ENCODE measurements at regions of chr2 and their contacts with region 1.

Region 1: GRCh38 chr2:70671092-70671675 is 96.8 kb downstream of the ADD2 start:
- DNase-seq: no peak
- ATAC-seq: no peak

Region 2: DNA sequence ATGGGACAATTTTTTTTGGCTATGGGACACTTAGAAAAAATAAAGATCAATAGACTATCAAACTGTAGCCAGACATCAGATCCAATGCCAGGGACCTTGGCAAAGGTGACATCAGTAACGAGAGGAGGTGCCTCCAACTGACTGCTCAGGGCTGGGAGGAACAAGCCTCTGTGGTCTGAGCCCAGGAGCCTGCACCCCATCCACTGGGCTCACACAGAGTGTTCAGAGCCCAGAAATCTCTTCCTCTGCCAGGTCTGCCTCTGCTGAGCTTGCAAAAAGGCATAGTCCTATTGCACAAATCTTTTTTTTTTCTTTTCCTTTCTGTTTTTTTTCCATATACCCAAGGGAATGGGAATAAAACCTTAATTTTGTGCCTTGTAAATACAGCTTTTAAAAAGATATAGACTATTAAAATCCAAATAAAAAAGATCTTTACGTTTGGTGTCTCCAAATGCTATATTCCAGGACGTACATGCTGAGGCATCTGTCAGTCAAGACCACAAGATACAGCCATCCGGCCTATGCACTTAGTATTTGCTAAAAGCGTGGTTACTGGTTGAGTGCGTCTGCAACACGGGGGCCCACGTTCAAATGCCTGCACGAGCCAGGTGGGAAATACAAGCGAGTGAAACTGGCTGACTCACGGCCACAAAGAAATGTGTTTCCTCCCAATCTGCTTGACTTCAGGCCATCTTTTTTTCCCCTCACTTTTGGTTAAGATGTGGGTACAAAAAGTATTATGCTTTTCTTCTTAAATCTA is 1944.4 kb before region 1 on chr2:
- intact Hi-C with region 1: loop called (anchors 10 kb)
- DNase-seq: no peak
- ATAC-seq: peak; percentile 67

Region 3: DNA sequence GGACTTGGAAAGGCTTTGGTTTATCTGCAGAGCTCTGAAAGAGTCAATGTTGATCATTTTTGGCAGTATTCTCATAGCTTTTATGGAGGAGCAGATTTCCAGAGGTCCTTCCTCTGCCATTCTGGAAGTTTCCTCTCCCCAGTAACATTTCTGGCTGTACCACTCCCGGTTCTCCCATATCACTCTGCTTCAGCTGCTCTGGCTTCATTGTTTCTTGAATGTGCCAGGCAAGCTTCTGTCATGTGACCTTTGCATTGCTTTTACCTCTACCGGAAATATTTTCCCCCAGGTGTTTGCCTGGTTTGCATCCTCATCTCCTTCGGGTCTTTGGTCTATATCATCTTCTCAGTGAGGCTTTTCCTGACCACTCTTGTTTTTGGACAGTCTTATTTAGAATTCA is 400.9 kb before region 1 on chr2:
- intact Hi-C with region 1: no loop called
- DNase-seq: no peak
- ATAC-seq: no peak

Region 4: GRCh38 chr2:70656421-70657010 is 14.7 kb before region 1 on chr2:
- intact Hi-C with region 1: no loop called
- DNase-seq: no peak
- ATAC-seq: no peak

Region 5: DNA sequence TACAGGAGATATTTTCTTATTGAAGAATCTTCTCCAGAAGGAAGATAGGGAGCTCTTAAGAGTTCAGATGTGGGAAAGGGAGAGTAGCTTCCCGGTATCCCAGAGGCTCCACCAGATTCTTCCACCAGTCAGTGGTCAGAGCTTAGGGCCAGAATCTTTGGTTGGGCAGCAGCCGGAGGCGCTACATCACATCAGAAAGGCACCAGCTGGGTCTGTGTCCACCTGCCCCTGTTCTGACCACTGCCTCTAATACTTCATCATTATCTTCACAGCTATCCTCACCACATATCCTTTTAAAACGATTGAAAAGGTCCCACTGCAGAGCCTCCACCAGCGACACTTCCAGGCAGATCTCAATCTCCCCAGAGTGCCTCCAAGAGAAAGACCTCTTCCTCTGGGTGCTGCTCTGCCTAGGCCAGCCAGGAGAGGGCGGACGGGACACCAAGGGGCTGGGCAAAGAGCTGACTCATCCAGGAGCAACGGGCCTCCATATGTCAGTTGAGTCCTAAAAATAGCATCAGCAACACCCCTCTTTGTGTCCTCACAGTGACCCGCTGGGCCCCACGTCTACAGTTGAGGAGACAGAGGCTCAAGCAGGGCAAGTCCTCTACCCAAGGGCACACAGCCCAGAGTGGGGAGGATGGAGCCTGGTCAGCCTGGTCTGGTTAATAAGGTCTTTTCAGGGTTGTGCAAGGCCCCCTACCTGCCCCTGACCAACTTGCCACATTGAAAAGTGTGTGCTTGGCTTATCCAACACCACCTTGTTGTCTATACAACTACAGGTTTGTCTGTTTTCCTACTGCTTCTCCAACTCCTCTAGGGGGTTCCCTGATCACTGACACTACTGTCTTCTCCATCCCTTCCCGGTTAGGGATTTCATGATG is 15.6 kb after region 1 on chr2:
- intact Hi-C with region 1: no loop called
- DNase-seq: peak; percentile 27
- ATAC-seq: no peak

Measured in sciatic nerve (tissue), 2 donors.